Breast epithelium (tissue), 4 donors: ENCODE measurements at regions of chr13 and their contacts with region 1.

Region 1: DNA sequence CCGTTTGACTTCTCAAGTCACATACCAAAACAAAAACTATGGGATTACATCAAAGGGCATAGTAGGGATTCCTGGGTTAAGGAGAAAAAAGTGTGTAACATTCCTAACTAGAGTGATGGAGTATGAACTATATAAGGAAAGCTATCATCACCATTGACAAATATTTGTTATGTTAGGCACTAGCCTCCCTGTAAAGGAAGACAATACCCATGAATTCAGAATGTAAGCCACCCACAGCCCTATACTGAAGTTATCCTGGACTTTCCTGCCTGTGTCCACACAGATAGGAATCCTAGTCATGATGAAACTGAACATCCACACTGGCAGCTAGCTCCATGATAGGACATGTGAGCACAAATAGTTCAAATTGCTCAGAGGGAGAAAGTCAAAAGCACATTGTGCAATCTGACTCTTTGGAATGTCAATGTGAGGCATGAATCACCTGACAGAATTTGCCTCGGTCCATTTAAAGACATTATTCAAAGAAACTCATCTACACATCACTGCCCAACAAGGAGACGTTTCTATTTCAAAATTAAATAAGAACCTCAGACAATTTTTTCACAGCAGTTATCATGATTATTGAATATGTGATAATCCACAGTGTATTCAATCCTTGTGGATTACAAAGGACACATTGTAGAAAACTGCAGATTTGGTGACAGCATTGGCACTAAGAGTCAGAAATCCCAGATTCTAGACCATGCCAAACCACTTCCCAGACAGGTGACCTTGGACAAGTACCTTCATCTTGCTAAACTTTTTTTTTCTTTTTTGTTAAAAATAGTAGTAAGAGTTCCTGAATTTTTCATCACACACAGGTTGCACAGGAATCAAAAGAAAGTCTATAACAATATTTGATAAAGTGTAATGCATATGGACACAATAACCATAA is 529.3 kb downstream of the IRS2 start:
- DNase-seq: peak in 1 of 2 donors; percentile 83
- H3K4me3 ChIP-seq: no peak overlapping the region
- H3K27ac ChIP-seq: peak overlapping the region; percentile 41 to 48
- H3K4me1 ChIP-seq: no peaks in the 10 kb centered on the region
- H3K27me3 ChIP-seq: no peaks in the 10 kb centered on the region
- CTCF ChIP-seq: no peak
- POLR2A ChIP-seq: no peak

Region 2: DNA sequence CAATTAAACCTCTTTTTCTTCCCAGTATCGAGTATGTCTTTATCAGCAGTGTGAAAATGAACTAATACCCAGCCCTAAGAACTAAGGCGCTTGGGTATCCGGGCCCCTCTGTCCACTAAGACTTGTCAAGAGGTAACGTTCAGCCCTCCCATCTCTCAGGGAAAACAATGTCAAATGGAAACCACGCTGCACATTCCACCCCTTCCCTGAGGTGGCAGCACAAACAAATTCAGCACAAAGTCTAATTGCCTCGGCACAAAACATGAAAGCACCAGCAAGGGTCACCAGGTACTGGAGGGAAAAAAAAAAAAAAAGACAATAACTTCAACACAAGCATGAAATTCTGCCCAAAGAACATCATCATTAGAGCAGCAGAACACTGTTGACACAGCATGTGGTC is 21.7 kb before region 1 on chr13:
- intact Hi-C with region 1: loop called (anchors 2 kb)
- DNase-seq: no peak
- H3K4me3 ChIP-seq: no peak overlapping the region
- H3K27ac ChIP-seq: peak overlapping the region in 1 of 2 donors; percentile 68
- H3K4me1 ChIP-seq: no peaks in the 10 kb centered on the region
- H3K27me3 ChIP-seq: no peaks in the 10 kb centered on the region
- CTCF ChIP-seq: no peak
- POLR2A ChIP-seq: no peak